Dorsolateral prefrontal cortex (tissue), 120 donors: ENCODE measurements at regions of chr6 and their contacts with region 1.

Region 1: DNA sequence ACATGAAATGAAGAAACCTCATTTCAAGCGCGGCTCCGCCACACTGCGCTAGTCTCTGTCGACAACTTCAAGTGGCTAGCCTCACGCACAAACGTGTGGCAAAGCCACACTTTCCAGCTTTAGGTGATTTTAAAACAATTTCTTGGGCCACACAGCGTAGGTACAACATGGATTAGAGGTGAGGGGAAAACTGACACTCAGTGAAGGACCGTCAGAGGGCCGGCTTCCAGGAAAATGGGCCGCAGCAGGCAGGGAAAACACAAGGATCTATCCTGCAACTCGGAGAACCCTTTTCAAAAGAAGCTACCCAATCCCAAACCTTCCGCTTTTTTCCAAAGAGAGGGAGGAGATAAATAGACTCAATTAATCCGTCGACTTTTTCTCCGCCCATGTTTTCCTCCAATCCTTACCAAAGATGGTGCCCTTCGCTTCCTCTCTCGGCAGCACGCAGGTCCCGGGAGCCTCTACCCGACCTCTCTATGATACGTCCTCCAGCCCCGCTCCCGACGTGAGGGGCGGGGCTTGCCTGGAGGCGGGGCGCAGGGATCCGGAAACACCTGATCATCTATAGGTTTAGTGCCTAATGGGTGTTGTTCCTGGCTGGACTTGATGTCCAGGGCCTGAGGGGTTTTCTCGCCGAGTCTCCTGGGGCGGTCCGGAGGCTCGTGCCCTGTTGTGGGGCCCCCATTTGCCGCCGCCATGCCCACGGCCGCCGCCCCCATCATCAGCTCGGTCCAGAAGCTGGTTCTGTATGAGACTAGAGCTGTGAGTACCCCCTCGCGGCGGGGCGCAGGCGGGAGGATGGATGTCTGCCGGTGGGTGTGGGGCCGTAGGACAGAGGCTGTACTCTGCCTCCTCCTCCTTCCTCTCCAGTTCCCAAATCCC is at the starts of genes AK9 and FIG4:
- DNase-seq: peak; percentile 80 to 97 (median 95)
- H3K4me3 ChIP-seq: peak within 1 kb of the TSS; percentile 70 to 99 (median 89)
- H3K27ac ChIP-seq: peak within 1 kb of the TSS; percentile 43 to 95 (median 86)
- H3K27me3 ChIP-seq: no peaks in the 10 kb centered on the region
- CTCF ChIP-seq: peak in 41 of 56 donors; percentile 7 to 60 (median 31)
- total RNA-seq, gene AK9: 19.7 to 45.7 (median 26.7) TPM
- total RNA-seq, gene FIG4: 19.4 to 57.3 (median 37.9) TPM

Region 2: GRCh38 chr6:109482905-109483735 is 207.9 kb before region 1 on chr6 and contains the start of gene ZBTB24:
- intact Hi-C with region 1: loop called in 1 of 2 experiments (anchors 2 kb)
- DNase-seq: peak; percentile 76 to 95 (median 87)
- H3K4me3 ChIP-seq: peak within 1 kb of the TSS; percentile 67 to 100 (median 96)
- H3K27ac ChIP-seq: peak within 1 kb of the TSS in 53 of 59 donors; percentile 30 to 90 (median 78)
- H3K27me3 ChIP-seq: no peaks in the 10 kb centered on the region
- CTCF ChIP-seq: peak in 9 of 56 donors; percentile 13 to 40 (median 21)
- total RNA-seq, gene ZBTB24: 5.4 to 12.6 (median 10.0) TPM

Region 3: DNA sequence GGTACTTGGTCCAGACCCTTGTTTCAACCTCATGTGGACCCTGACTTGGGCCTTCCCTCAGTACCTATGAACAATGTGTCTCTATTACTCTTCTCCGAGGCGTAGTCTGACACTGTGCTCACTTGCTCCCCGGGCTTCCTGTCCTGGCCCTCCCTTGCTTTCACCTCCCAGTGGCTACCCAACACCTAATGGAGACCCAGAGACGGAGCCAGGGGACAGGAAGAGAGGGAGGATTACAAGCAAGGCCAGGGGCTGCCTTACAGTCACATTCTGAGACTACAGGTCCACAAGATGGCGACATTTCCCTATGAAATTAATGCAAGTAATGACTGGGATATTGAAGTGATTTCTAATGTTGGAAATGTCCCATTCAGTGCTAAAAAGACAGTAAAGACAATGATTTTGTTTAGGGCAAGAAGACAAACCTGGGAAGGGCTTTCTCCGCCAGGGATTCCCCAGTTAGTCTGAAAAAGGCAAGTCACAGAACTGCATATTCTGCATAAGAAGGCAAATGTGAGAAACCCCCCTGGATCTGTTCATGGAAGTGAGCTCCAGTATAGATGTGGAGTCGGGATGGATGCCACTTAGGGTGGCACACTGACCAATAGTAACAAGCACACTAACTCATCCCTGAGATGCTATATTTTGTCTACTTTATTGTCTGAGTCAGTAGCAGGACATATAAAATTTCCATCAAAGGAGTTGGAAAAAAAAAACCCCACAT is 163.9 kb before region 1 on chr6:
- intact Hi-C with region 1: loop called in 1 of 2 experiments (anchors 5 kb)
- DNase-seq: peak in 4 of 10 donors; percentile 12 to 40 (median 18)
- H3K4me3 ChIP-seq: no peak overlapping the region
- H3K27ac ChIP-seq: no peak overlapping the region
- H3K27me3 ChIP-seq: no peaks in the 10 kb centered on the region
- CTCF ChIP-seq: peak in 54 of 56 donors; percentile 29 to 75 (median 60)

Region 4: GRCh38 chr6:110179401-110180227 is 488.6 kb after region 1 on chr6 and contains the start of gene WASF1:
- intact Hi-C with region 1: loop called (anchors 5 kb)
- DNase-seq: peak; percentile 94 to 97 (median 96)
- H3K4me3 ChIP-seq: peak within 1 kb of the TSS; percentile 49 to 100 (median 90)
- H3K27ac ChIP-seq: peak within 1 kb of the TSS; percentile 73 to 94 (median 88)
- H3K27me3 ChIP-seq: no peaks in the 10 kb centered on the region
- CTCF ChIP-seq: peak in 21 of 56 donors; percentile 2 to 52 (median 29)
- total RNA-seq, gene WASF1: 44.7 to 218 (median 145) TPM